AG04450 (cell line): ENCODE measurements at regions of chr9 and their contacts with region 1.

Region 1: DNA sequence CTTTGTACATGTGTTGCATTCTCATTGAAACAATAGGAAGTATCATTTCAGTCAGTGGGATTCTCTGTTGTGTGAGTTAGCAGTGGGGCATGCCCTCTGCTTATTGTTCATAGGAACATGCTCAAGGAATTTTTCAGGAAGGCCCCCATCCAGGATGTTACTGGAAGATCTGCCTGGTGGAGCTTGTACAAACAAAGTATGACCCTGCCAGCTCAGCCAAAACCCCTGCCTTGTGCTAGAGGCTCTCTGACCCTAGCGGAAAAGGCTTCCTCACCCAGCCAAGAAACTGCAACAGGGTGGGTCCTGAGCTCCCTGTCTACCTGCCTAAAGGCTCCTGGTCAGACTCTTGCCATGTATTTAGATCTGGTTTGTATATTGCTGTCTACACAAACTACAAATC is 43.2 kb downstream of the MRRF start:
- DNase-seq: no peak
- H3K4me3 ChIP-seq: no peak overlapping the region
- H3K27ac ChIP-seq: no peak overlapping the region
- H3K27me3 ChIP-seq: no peaks in the 10 kb centered on the region
- CTCF ChIP-seq: no peak

Region 2: GRCh38 chr9:122264360-122265148 is 43.4 kb before region 1 on chr9 and contains the starts of genes MRRF and RBM18:
- CTCF ChIA-PET with region 1: no interaction called
- POLR2A ChIA-PET with region 1: interaction called, 14 read pairs
- DNase-seq: peak; percentile 65
- H3K4me3 ChIP-seq: peak within 1 kb of the TSS; percentile 97
- H3K27ac ChIP-seq: peak within 1 kb of the TSS; percentile 86
- H3K27me3 ChIP-seq: no peaks in the 10 kb centered on the region
- CTCF ChIP-seq: no peak
- polyA plus RNA-seq, gene MRRF: 42.9 and 50.1 TPM in 2 replicates
- polyA plus RNA-seq, gene RBM18: 27.5 and 38.6 TPM in 2 replicates

Region 3: DNA sequence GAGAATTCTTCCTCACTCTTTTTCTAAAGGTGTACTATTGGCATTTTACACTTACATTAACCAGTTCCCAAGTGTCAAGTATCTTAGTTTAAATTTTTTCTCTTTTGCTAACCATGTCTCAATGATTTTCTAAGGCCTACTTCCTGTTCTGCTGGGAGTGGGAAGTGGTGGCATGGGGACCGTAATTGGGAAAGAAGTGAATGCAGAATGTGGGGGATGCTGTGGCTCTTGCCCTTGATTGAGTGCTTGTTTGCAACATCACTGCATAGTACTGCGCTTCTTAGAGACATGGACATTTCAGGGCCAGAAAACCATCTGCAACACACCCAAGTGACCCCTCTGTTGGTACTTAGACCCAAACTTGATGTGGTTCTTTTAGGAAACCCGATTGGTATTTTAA is 10.4 kb before region 1 on chr9:
- CTCF ChIA-PET with region 1: no interaction called
- POLR2A ChIA-PET with region 1: no interaction called
- DNase-seq: no peak
- H3K4me3 ChIP-seq: no peak overlapping the region
- H3K27ac ChIP-seq: no peak overlapping the region
- H3K27me3 ChIP-seq: no peaks in the 10 kb centered on the region
- CTCF ChIP-seq: no peak